CD8-positive, alpha-beta T cell (primary cell): ENCODE measurements at regions of chr4 and their contacts with region 1.

Region 1: DNA sequence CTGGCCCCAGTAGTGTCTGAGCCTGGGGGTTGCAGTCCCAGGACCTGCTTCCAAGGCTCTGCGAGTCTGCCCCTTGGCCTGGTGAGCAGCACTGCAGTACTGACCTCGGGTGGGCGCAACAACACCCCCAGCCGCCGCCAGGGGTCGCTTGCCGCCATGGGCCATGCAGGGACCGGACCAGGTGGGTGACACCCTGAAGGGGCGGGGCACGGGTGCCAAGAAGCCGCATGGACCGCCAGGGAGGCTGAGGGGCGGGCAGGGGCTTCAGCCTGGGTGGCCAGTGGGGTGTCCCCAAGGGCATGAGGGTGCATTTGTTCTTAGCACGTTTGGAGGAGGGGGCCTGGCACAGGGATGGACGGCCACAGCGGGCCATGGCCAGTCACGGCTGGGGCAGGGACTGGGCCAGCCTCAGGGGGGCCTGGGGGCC is 25.0 kb downstream of the TACC3 start:
- DNase-seq: peak; percentile 62 to 84 (median 78)
- ATAC-seq: peak; percentile 76
- H3K4me3 ChIP-seq: no peak overlapping the region
- H3K4me3 Mint-ChIP-seq: no peak overlapping the region
- H3K27ac ChIP-seq: no peak overlapping the region
- H3K27ac Mint-ChIP-seq: no peak overlapping the region
- H3K4me1 ChIP-seq: peaks cover 5% of the 10 kb centered on the region
- H3K4me1 Mint-ChIP-seq: no peaks in the 10 kb centered on the region
- H3K27me3 ChIP-seq: no peaks in the 10 kb centered on the region
- H3K27me3 Mint-ChIP-seq: peaks cover 3% of the 10 kb centered on the region
- CTCF ChIP-seq: peak; percentile 58

Region 2: GRCh38 chr4:1771555-1772305 is 25.5 kb after region 1 on chr4:
- CTCF ChIA-PET with region 1: no interaction called
- POLR2A ChIA-PET with region 1: no interaction called
- intact Hi-C with region 1: no loop called
- DNase-seq: peak in 1 of 9 experiments; percentile 34
- ATAC-seq: peak; percentile 43
- H3K4me3 ChIP-seq: no peak overlapping the region
- H3K4me3 Mint-ChIP-seq: no peak overlapping the region
- H3K27ac ChIP-seq: no peak overlapping the region
- H3K27ac Mint-ChIP-seq: no peak overlapping the region
- H3K4me1 ChIP-seq: no peaks in the 10 kb centered on the region
- H3K4me1 Mint-ChIP-seq: peaks cover 6% of the 10 kb centered on the region
- H3K27me3 ChIP-seq: peaks cover 0 to 2% of the 10 kb centered on the region in 2 experiments
- H3K27me3 Mint-ChIP-seq: peaks cover 7% of the 10 kb centered on the region
- CTCF ChIP-seq: no peak

Region 3: GRCh38 chr4:1809754-1810511 is 63.7 kb after region 1 on chr4:
- CTCF ChIA-PET with region 1: interaction called, 35 read pairs
- POLR2A ChIA-PET with region 1: no interaction called
- intact Hi-C with region 1: loop called in 1 of 2 experiments (anchors 1 kb)
- DNase-seq: peak; percentile 35 to 75 (median 61)
- ATAC-seq: peak; percentile 71
- H3K4me3 ChIP-seq: no peak overlapping the region
- H3K4me3 Mint-ChIP-seq: no peak overlapping the region
- H3K27ac ChIP-seq: no peak overlapping the region
- H3K27ac Mint-ChIP-seq: no peak overlapping the region
- H3K4me1 ChIP-seq: no peaks in the 10 kb centered on the region
- H3K4me1 Mint-ChIP-seq: no peaks in the 10 kb centered on the region
- H3K27me3 ChIP-seq: no peaks in the 10 kb centered on the region
- H3K27me3 Mint-ChIP-seq: no peaks in the 10 kb centered on the region
- CTCF ChIP-seq: peak; percentile 72

Region 4: DNA sequence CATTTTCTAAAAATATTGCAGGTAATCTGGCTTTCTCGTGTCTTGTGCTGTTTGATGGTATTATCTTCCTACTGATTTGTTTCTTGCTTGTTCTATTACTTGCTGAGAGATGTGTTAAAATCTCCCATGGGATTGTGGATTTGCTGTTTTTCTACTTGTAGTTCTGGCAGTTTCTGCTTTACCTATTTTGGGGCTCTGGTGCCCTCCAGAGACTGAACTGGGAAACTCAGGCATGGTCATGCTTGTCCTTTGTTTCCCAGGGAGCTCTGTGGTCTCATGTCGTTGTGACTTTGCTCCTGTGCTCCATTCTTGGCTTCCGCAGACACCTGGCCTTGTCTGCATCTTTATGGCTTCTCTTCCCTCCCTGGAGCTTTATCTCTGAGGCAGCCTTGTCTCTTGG is 164.4 kb after region 1 on chr4:
- CTCF ChIA-PET with region 1: interaction called, 220 read pairs
- POLR2A ChIA-PET with region 1: no interaction called
- intact Hi-C with region 1: no loop called
- DNase-seq: peak in 1 of 9 experiments; percentile 22
- ATAC-seq: no peak
- H3K4me3 ChIP-seq: no peak overlapping the region
- H3K4me3 Mint-ChIP-seq: no peak overlapping the region
- H3K27ac ChIP-seq: no peak overlapping the region
- H3K27ac Mint-ChIP-seq: no peak overlapping the region
- H3K4me1 ChIP-seq: no peaks in the 10 kb centered on the region
- H3K4me1 Mint-ChIP-seq: peaks cover 4% of the 10 kb centered on the region
- H3K27me3 ChIP-seq: no peaks in the 10 kb centered on the region
- H3K27me3 Mint-ChIP-seq: no peaks in the 10 kb centered on the region
- CTCF ChIP-seq: no peak

Region 5: DNA sequence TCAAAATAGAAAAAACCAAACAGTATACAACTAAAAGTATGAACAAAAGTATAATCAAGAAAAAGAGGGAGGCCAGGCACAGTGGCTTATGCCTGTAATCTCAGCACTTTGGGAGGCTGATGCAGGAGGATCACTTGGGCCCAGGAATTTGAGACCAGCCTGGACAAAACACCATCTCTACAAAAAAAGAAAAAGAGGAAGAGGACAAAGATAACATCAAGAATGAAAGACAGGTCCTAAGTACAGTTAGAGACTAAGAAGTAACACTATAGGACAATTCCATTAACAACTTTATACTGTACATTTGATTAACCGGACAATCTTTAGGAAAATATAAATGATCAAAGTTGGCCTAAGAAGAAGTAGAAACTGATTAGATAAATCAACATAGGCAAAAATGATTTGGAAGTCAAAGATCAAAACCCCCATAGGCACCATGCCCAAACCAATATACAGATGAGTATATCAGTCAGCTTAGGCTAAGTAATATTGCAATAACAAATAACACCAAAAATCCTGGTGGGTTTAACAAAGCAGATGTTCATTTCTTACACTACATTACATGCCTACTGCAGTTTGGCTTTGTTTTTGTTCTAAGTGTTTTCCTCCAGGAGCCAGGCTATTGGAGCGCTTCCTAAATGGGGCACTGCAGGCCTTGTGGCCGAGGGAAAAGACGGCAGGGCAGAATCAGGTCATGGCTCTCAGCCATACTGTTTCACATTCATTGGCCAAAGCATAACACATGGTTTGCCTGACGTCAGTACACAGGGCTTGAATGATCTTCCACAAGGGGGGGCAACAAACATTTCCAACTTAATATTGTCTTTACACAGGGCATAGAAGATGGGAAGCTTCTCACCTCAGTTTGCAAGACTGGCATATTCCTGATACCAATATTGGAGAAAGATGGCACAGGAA is 1653.3 kb after region 1 on chr4:
- CTCF ChIA-PET with region 1: no interaction called
- POLR2A ChIA-PET with region 1: no interaction called
- intact Hi-C with region 1: no loop called
- DNase-seq: peak in 1 of 9 experiments; percentile 24
- ATAC-seq: peak; percentile 58
- H3K4me3 ChIP-seq: no peak overlapping the region
- H3K4me3 Mint-ChIP-seq: no peak overlapping the region
- H3K27ac ChIP-seq: no peak overlapping the region
- H3K27ac Mint-ChIP-seq: no peak overlapping the region
- H3K4me1 ChIP-seq: no peaks in the 10 kb centered on the region
- H3K4me1 Mint-ChIP-seq: no peaks in the 10 kb centered on the region
- H3K27me3 ChIP-seq: no peaks in the 10 kb centered on the region
- H3K27me3 Mint-ChIP-seq: no peaks in the 10 kb centered on the region
- CTCF ChIP-seq: no peak